Posterior cingulate gyrus (tissue), 11 donors: ENCODE measurements at regions of chr9 and their contacts with region 1.

Region 1: GRCh38 chr9:88476491-88477271 is 58.3 kb upstream of the NXNL2 start:
- DNase-seq: no peak

Region 2: GRCh38 chr9:88218731-88219130 is 257.9 kb before region 1 on chr9:
- intact Hi-C with region 1: no loop called
- DNase-seq: no peak

Region 3: GRCh38 chr9:88399966-88400365 is 76.7 kb before region 1 on chr9:
- intact Hi-C with region 1: loop called (anchors 5 kb)
- DNase-seq: no peak

Region 4: DNA sequence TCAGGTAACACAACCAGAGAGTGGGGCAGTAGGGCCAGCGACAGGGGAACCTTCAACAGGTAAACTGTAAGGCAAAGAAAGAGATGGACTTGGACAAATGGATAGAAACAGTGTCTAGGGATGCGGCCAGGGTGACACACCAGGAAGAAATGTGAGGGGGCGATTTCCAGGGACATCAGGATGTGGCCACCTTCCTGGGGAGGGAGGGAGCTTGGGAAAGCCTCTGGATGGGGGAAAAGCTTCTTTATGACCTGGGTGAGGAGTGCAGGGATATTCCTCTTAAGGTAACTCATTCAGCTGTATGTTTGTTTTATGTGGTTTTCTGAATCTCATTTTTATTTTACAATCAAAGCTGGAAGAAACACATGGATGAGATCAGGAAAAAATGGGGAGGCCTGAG is 46.4 kb after region 1 on chr9:
- intact Hi-C with region 1: loop called (anchors 5 kb)
- DNase-seq: peak in 1 of 10 donors; percentile 13